ENCODE measurements at regions of chr6 and their contacts with region 1.

Region 1: GRCh38 chr6:35511562-35511941 is 1.1 kb downstream of the TULP1 start:
- DNase-seq: no peak
- H3K4me3 ChIP-seq: peak overlapping the region in 1 of 4 donors; percentile 30
- H3K27ac ChIP-seq: no peak overlapping the region
- H3K4me1 ChIP-seq: peaks cover 0 to 7% (median 3%) of the 10 kb centered on the region in 4 donors
- H3K27me3 ChIP-seq: peaks cover 54% of the 10 kb centered on the region
- CTCF ChIP-seq: no peak
- EP300 ChIP-seq: no peak
- POLR2A ChIP-seq: no peak

Region 2: GRCh38 chr6:35562053-35562452 is 50.5 kb after region 1 on chr6:
- in situ Hi-C with region 1: no loop called
- intact Hi-C with region 1: loop called (anchors 5 kb)
- DNase-seq: no peak
- H3K4me3 ChIP-seq: no peak overlapping the region
- H3K27ac ChIP-seq: no peak overlapping the region
- H3K4me1 ChIP-seq: no peaks in the 10 kb centered on the region
- H3K27me3 ChIP-seq: peaks cover 24% of the 10 kb centered on the region
- CTCF ChIP-seq: no peak
- EP300 ChIP-seq: no peak
- POLR2A ChIP-seq: no peak